ENCODE measurements at regions of chr20 and their contacts with region 1.

Region 1: DNA sequence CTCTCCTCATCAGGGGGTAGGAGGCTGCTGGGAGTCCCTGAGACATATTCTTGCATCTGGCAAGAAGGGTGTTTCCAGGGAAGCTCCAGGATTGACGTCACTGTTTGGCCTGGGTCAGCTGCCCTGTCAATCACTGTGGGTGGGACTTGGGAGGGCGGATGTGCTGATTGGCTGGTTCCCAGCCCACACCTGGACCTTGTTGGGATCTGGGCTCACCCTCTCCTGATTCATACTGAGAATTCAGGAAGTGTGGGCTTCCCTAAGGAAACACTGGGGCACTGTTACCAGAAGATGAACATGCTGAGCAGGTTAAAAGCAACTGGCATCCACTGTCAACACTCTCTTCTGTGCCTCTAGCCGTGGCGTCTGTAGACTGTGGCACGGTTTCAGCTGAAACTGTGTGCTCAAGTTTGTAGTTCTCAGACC is 36.5 kb downstream of the CDH26 start:
- DNase-seq: peak; percentile 57

Region 2: DNA sequence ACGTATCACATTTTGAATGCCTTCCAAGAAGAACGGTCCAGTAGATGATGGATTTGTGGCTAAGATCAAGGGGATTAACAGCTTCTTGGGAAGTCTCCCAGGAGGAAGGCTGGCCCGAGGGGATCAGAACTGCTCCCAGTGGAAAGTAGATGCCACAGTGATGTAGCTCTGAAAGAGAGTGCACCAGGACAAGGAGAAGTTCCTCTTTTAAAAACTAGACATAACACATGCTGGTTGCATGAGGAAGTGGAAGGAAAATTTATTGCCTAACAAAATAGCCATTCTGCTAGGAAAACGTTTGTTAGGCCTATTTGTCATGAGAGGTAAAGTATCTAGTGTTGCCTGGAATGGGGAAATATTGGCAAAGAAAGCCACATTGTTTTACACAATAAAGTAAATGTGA is 51.3 kb after region 1 on chr20:
- in situ Hi-C with region 1: loop called (anchors 10 kb)
- DNase-seq: peak; percentile 88